ENCODE measurements at regions of chr3 and their contacts with region 1.

Region 1: DNA sequence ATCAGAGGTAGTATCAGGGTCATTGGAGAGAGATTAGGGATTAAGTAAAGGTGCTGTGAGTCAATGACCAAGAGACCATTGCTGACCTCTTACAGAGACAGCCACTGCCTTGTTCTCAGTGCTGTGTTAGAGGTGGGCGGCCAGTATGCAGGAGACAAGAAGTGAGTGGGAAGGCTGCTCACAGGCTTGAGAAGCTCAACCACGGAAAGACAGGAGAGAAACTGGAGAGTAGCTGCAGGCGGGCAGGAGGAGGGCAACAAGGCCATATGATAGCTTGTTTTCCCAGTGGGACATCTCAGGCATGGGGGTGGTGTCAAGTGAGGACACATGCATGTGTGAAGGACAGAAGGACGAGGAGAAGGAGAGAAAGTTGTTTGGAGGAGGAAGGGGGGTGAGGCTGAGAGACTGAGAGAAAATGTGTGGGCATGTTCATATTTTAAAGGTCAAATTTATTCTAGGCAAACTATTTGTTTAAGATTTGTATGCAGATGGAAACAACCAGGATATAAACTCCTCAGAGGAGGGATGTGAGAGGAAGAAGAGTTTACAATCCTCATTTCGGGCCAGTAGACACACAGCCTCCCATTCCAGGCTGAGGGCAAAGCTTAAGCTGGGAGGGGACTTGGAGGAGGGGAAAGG is 237.5 kb downstream of the PDCD6IP start:
- DNase-seq: no peak
- ATAC-seq: no peak
- H3K4me3 ChIP-seq: no peak overlapping the region
- H3K27ac ChIP-seq: no peak overlapping the region
- H3K4me1 ChIP-seq: peaks cover 0 to 8% of the 10 kb centered on the region in 2 experiments; a peak in 3 of 5 replicates
- H3K27me3 ChIP-seq: no peaks in the 10 kb centered on the region
- CTCF ChIP-seq: no peak
- EP300 ChIP-seq: no peak
- POLR2A ChIP-seq: no peak
- RAD21 ChIP-seq: no peak

Region 2: DNA sequence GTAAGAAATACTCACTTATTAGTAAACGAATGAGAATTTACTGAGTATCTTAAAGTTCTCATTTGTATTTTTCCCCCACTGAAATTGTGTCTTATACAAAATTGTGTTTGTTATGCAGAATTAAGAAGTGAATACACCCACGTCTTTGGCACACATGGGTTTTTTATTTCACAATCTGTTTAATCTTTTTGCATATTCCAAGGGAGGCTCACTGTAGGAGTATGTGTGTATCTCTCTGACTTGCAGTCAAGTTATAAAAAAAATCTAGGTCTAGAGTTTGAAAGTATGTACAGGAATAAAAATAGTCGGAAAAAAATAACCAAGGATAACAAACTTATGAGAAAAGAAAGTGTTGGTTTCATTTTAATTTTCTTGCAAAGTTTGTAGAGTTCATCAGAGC is 17.7 kb after region 1 on chr3:
- CTCF ChIA-PET with region 1: no interaction called
- POLR2A ChIA-PET with region 1: interaction called, 14 read pairs
- in situ Hi-C with region 1: no loop called
- intact Hi-C with region 1: no loop called
- DNase-seq: no peak
- ATAC-seq: no peak
- H3K4me3 ChIP-seq: no peak overlapping the region
- H3K27ac ChIP-seq: no peak overlapping the region
- H3K4me1 ChIP-seq: peaks cover 0 to 13% of the 10 kb centered on the region in 2 experiments; a peak in 3 of 5 replicates
- H3K27me3 ChIP-seq: no peaks in the 10 kb centered on the region
- CTCF ChIP-seq: no peak
- EP300 ChIP-seq: no peak
- POLR2A ChIP-seq: no peak
- RAD21 ChIP-seq: no peak